ENCODE measurements at regions of chr12 and their contacts with region 1.

Region 1: GRCh38 chr12:65556681-65557437 is 267.4 kb upstream of the HMGA2 start:
- DNase-seq: peak; percentile 90
- H3K4me3 ChIP-seq: no peak overlapping the region
- H3K27ac ChIP-seq: no peak overlapping the region
- H3K4me1 ChIP-seq: peaks cover 14% of the 10 kb centered on the region
- H3K27me3 ChIP-seq: no peaks in the 10 kb centered on the region
- CTCF ChIP-seq: peak; percentile 98

Region 2: DNA sequence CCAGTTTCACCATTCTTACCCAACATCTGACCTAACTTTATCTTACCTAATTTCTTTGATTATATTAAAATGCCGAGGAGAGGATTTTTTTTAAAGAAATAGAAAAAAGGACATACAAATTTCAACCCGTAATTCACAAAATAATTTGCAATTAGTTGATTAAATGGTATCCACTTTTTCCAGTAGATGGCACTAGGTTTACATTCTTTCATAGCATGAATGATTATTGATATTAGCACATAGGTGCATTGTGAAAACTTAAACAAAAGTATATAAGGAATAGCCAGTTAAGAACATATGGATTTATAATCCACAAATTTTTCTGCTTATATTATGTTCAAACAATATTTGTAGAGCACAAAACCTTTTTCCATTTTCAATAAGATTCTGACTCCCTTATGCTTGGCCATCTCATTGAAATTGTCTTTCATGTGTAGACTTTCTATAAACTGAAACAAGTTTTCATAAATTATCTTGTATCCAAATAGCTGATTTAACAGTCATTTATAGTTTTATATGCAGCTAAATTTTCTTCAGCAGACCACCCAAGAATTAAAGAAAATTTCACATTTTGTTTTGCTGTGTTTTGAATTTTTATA is 243.0 kb before region 1 on chr12:
- CTCF ChIA-PET with region 1: interaction called, 4 read pairs
- POLR2A ChIA-PET with region 1: no interaction called
- intact Hi-C with region 1: loop called (anchors 10 kb)
- DNase-seq: peak; percentile 58
- H3K4me3 ChIP-seq: no peak overlapping the region
- H3K27ac ChIP-seq: no peak overlapping the region
- H3K4me1 ChIP-seq: peaks cover 52% of the 10 kb centered on the region
- H3K27me3 ChIP-seq: no peaks in the 10 kb centered on the region
- CTCF ChIP-seq: peak; percentile 76

Region 3: GRCh38 chr12:65327207-65328076 is 229.4 kb before region 1 on chr12:
- CTCF ChIA-PET with region 1: no interaction called
- POLR2A ChIA-PET with region 1: no interaction called
- intact Hi-C with region 1: no loop called
- DNase-seq: no peak
- H3K4me3 ChIP-seq: no peak overlapping the region
- H3K27ac ChIP-seq: no peak overlapping the region
- H3K4me1 ChIP-seq: peaks cover 17% of the 10 kb centered on the region
- H3K27me3 ChIP-seq: no peaks in the 10 kb centered on the region
- CTCF ChIP-seq: no peak

Region 4: DNA sequence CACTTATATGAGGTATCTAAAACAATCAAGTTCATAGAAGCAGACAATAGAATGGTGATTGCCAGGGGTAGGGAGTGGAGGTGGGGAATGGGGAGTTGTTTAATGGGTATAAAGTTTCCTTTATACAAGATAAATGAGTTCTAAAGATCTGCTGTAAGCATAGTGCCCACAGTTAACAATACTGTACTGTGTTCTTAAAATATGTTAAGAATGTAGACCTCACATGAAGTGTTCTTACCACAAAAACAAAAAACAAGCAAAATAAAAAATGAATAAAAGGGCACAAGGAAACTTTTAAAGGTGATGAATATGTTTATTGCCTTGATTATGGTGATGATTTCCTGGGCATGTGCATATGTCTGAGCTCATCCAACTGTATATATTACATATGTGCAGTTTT is 66.6 kb before region 1 on chr12:
- CTCF ChIA-PET with region 1: no interaction called
- POLR2A ChIA-PET with region 1: no interaction called
- intact Hi-C with region 1: no loop called
- DNase-seq: no peak
- H3K4me3 ChIP-seq: no peak overlapping the region
- H3K27ac ChIP-seq: no peak overlapping the region
- H3K4me1 ChIP-seq: no peaks in the 10 kb centered on the region
- H3K27me3 ChIP-seq: no peaks in the 10 kb centered on the region
- CTCF ChIP-seq: no peak

Region 5: DNA sequence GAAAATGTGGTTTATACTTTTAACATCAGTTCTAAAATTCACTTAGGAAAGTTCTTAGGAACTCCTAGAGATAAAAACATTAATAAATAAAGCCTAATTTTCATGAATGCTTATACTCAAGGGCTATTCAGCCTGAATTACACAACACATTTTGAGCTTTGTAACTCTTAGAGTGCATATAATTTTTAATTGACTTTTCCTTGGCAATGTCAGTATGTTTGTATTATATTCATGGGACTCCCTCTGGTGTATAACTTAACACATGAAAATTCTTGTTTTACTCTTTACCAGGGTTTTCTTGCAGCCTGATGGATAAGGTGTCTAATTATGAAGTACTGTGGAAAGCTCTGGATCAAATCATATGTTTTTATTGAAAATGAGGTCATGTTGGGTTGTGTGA is 116.9 kb after region 1 on chr12:
- CTCF ChIA-PET with region 1: no interaction called
- POLR2A ChIA-PET with region 1: no interaction called
- intact Hi-C with region 1: loop called (anchors 2 kb)
- DNase-seq: peak; percentile 51
- H3K4me3 ChIP-seq: no peak overlapping the region
- H3K27ac ChIP-seq: no peak overlapping the region
- H3K4me1 ChIP-seq: peaks cover 5% of the 10 kb centered on the region
- H3K27me3 ChIP-seq: no peaks in the 10 kb centered on the region
- CTCF ChIP-seq: peak; percentile 55

Region 6: GRCh38 chr12:65823513-65824375 is 266.9 kb after region 1 on chr12:
- CTCF ChIA-PET with region 1: interaction called, 3 read pairs
- POLR2A ChIA-PET with region 1: no interaction called
- intact Hi-C with region 1: loop called (anchors 5 kb)
- DNase-seq: peak; percentile 92
- H3K4me3 ChIP-seq: peak overlapping the region; percentile 85
- H3K27ac ChIP-seq: peak overlapping the region; percentile 95
- H3K4me1 ChIP-seq: peaks cover 18% of the 10 kb centered on the region
- H3K27me3 ChIP-seq: no peaks in the 10 kb centered on the region
- CTCF ChIP-seq: no peak

Region 7: DNA sequence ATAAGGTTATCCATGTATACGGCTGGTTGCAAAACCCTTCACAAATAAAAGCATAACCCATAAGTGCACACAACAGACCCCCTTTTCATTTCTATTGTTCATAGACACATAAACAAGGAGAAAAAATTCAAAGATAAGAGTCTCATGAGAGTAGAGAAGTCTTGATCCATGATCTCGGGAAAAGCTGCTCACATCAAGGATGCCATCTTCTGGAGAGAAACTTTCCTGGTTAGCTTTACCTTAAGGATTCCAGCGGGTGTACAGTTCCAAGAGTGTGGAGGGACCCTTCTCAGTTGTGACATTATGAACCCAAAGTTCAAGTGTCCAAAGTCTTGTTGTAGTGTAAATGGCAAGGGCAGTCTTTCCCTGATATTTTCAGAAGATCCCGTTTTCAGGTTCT is 429.2 kb after region 1 on chr12:
- CTCF ChIA-PET with region 1: no interaction called
- POLR2A ChIA-PET with region 1: no interaction called
- intact Hi-C with region 1: loop called (anchors 5 kb)
- DNase-seq: no peak
- H3K4me3 ChIP-seq: no peak overlapping the region
- H3K27ac ChIP-seq: no peak overlapping the region
- H3K4me1 ChIP-seq: no peaks in the 10 kb centered on the region
- H3K27me3 ChIP-seq: no peaks in the 10 kb centered on the region
- CTCF ChIP-seq: peak; percentile 26; the same call in 1 of the 2 replicates

Region 8: DNA sequence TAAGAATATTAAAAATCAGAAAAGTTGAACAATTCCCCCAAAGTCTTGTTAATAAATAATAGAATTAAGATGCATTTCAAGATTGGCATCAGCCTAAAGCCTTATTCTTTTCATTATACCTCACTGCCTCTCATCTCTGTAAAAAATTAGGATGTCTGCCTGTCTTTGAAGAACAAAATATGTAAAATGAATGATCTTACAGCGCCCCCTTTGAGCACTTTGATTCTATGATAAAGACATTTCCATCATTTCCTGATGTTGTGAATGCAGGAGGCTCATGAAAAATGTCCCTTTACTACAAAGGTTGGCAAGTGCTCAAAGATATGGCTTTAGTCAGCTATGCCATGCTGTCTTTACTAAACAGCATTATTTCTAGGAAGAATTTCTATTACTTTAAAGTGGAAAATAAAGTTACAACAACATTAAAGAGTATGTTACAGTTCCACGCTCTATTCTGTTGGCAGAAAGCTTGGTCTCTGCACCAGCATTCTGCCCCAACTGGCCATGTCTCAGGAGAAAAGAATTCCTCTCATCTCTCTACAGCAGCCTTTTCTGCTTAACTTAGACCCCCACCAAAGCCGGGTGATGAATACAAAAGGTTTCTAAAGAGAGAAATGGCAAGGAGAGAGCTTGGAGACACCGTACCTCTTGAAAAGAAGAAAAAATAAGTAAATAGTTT is 478.6 kb after region 1 on chr12:
- CTCF ChIA-PET with region 1: no interaction called
- POLR2A ChIA-PET with region 1: no interaction called
- intact Hi-C with region 1: loop called (anchors 1 kb)
- DNase-seq: peak; percentile 82
- H3K4me3 ChIP-seq: no peak overlapping the region
- H3K27ac ChIP-seq: peak overlapping the region; percentile 2
- H3K4me1 ChIP-seq: peaks cover 13% of the 10 kb centered on the region
- H3K27me3 ChIP-seq: no peaks in the 10 kb centered on the region
- CTCF ChIP-seq: peak; percentile 68

Region 9: GRCh38 chr12:66087365-66087943 is 530.6 kb after region 1 on chr12:
- CTCF ChIA-PET with region 1: interaction called, 7 read pairs
- POLR2A ChIA-PET with region 1: no interaction called
- intact Hi-C with region 1: loop called (anchors 5 kb)
- DNase-seq: peak; percentile 88
- H3K4me3 ChIP-seq: no peak overlapping the region
- H3K27ac ChIP-seq: peak overlapping the region; percentile 42
- H3K4me1 ChIP-seq: peaks cover 26% of the 10 kb centered on the region
- H3K27me3 ChIP-seq: no peaks in the 10 kb centered on the region
- CTCF ChIP-seq: peak; percentile 91